ENCODE measurements at regions of chr17 and their contacts with region 1.

Region 1: GRCh38 chr17:38539386-38539785 is 66.4 kb downstream of the SRCIN1 start:
- DNase-seq: no peak
- H3K4me3 ChIP-seq: no peak overlapping the region
- H3K27me3 ChIP-seq: peaks cover 17% of the 10 kb centered on the region
- CTCF ChIP-seq: no peak

Region 2: DNA sequence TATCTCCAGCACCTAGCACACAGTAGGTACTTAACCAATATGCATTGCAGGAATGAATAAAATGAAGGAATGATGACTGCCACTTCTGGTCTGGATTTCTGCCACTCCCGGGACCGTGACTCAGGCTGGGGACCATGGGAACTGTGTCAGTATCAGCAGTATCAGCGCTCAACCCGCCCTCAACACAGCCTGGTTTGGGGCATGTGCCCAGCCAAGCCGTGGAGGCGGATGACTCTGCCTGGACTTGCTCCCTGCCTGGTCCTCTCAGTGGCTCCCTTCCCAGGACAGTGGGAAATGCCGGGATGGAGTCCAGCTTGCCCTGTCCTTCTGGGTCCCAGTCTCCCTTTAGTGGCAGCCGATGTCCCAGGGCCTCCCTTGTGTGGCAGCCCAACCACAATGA is 11.3 kb after region 1 on chr17:
- CTCF ChIA-PET with region 1: interaction called, 5 read pairs
- POLR2A ChIA-PET with region 1: interaction called, 22 read pairs
- DNase-seq: no peak
- H3K4me3 ChIP-seq: no peak overlapping the region
- H3K27me3 ChIP-seq: peaks cover 3% of the 10 kb centered on the region
- CTCF ChIP-seq: no peak

Region 3: GRCh38 chr17:38557836-38558727 is 18.7 kb after region 1 on chr17:
- CTCF ChIA-PET with region 1: interaction called, 38 read pairs
- POLR2A ChIA-PET with region 1: no interaction called
- DNase-seq: peak; percentile 53
- H3K4me3 ChIP-seq: peak overlapping the region; percentile 35
- H3K27me3 ChIP-seq: peaks cover 4% of the 10 kb centered on the region
- CTCF ChIP-seq: peak; percentile 98

Region 4: GRCh38 chr17:38605888-38606645 is 66.7 kb after region 1 on chr17 and contains the start of gene SRCIN1:
- CTCF ChIA-PET with region 1: no interaction called
- POLR2A ChIA-PET with region 1: no interaction called
- DNase-seq: no peak
- H3K4me3 ChIP-seq: peak within 1 kb of the TSS; percentile 42
- H3K27me3 ChIP-seq: peaks cover 47% of the 10 kb centered on the region
- CTCF ChIP-seq: peak; percentile 60
- polyA plus RNA-seq, gene SRCIN1: not detected in 2 replicates